Testis (tissue), 5 donors: ENCODE measurements at regions of chr1 and their contacts with region 1.

Region 1: GRCh38 chr1:16078925-16079656 is 5.6 kb upstream of the FAM131C start:
- DNase-seq: peak; percentile 89
- H3K4me3 ChIP-seq: no peak overlapping the region
- H3K27ac ChIP-seq: peak overlapping the region in 1 of 2 donors; percentile 59
- H3K4me1 ChIP-seq: peaks cover 13% of the 10 kb centered on the region
- H3K27me3 ChIP-seq: no peaks in the 10 kb centered on the region
- CTCF ChIP-seq: peak; percentile 84 to 92 (median 88)
- POLR2A ChIP-seq: no peak

Region 2: GRCh38 chr1:15966081-15966955 is 112.8 kb before region 1 on chr1:
- intact Hi-C with region 1: no loop called
- DNase-seq: no peak
- H3K4me3 ChIP-seq: no peak overlapping the region
- H3K27ac ChIP-seq: no peak overlapping the region
- H3K4me1 ChIP-seq: peaks cover 22% of the 10 kb centered on the region
- H3K27me3 ChIP-seq: no peaks in the 10 kb centered on the region
- CTCF ChIP-seq: no peak
- POLR2A ChIP-seq: no peak

Region 3: GRCh38 chr1:16017461-16018303 is 61.4 kb before region 1 on chr1 and contains the start of gene HSPB7:
- intact Hi-C with region 1: no loop called
- DNase-seq: peak; percentile 87
- H3K4me3 ChIP-seq: peak within 1 kb of the TSS in 1 of 2 donors; percentile 20
- H3K27ac ChIP-seq: peak within 1 kb of the TSS; percentile 84 to 88
- H3K4me1 ChIP-seq: peaks cover 68% of the 10 kb centered on the region
- H3K27me3 ChIP-seq: no peaks in the 10 kb centered on the region
- CTCF ChIP-seq: no peak
- POLR2A ChIP-seq: no peak
- total RNA-seq, gene HSPB7: 9.0 to 11.7 TPM

Region 4: GRCh38 chr1:16181887-16182719 is 103.0 kb after region 1 on chr1:
- intact Hi-C with region 1: loop called (anchors 2 kb)
- DNase-seq: peak; percentile 85
- H3K4me3 ChIP-seq: no peak overlapping the region
- H3K27ac ChIP-seq: peak overlapping the region; percentile 23 to 82
- H3K4me1 ChIP-seq: peaks cover 9% of the 10 kb centered on the region
- H3K27me3 ChIP-seq: no peaks in the 10 kb centered on the region
- CTCF ChIP-seq: no peak
- POLR2A ChIP-seq: no peak

Region 5: GRCh38 chr1:16187748-16188401 is 108.8 kb after region 1 on chr1:
- intact Hi-C with region 1: loop called (anchors 2 kb)
- DNase-seq: peak; percentile 83
- H3K4me3 ChIP-seq: no peak overlapping the region
- H3K27ac ChIP-seq: no peak overlapping the region
- H3K4me1 ChIP-seq: no peaks in the 10 kb centered on the region
- H3K27me3 ChIP-seq: no peaks in the 10 kb centered on the region
- CTCF ChIP-seq: peak; percentile 94 to 96 (median 96)
- POLR2A ChIP-seq: no peak

Region 6: DNA sequence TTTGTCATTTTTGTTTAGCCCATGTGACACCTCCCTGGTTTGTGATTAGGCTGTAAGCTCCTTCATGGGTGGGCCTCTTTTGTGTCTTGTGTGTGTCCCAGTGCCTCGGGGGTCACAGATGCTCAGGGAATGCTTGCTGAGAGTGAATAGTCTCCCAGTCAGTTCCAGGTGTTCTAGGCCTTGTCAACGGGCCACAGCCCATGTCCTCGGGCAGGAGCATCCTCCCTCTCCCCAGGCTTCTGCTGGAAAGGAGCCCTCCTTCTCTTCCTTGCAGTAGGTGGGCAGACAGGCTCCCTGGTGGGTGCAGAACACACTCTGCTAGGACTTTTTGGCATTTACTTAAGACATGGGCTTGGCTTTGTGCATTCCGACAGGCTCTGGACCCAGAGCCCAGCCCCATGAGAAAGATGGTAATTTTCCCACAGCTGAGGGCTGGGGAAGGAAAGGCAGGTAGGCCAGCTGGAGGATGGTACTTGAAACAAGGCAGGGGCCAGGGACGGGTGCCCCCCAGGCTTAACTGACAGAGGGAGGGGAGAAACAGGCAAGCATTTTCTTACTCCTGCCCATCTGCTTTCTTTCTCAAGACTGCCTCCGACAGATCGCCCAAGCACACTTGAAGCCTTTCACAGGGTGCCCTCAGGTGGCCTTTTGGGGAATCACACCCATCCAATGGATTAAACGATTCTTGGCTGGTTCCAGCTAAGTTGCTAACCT is 165.0 kb after region 1 on chr1:
- intact Hi-C with region 1: loop called (anchors 10 kb)
- DNase-seq: peak; percentile 87
- H3K4me3 ChIP-seq: no peak overlapping the region
- H3K27ac ChIP-seq: peak overlapping the region; percentile 1 to 12
- H3K4me1 ChIP-seq: peaks cover 25% of the 10 kb centered on the region
- H3K27me3 ChIP-seq: no peaks in the 10 kb centered on the region
- CTCF ChIP-seq: peak; percentile 65 to 91 (median 66)
- POLR2A ChIP-seq: no peak